ENCODE measurements at regions of chr2 and their contacts with region 1.

Region 1: GRCh38 chr2:234135720-234136221 is 85.3 kb downstream of the SPP2 start:
- DNase-seq: peak; percentile 84
- H3K4me3 Mint-ChIP-seq: no peak overlapping the region
- H3K27ac Mint-ChIP-seq: peak overlapping the region; percentile 57
- H3K4me1 Mint-ChIP-seq: peaks cover 21% of the 10 kb centered on the region
- H3K27me3 Mint-ChIP-seq: peaks cover 7% of the 10 kb centered on the region

Region 2: DNA sequence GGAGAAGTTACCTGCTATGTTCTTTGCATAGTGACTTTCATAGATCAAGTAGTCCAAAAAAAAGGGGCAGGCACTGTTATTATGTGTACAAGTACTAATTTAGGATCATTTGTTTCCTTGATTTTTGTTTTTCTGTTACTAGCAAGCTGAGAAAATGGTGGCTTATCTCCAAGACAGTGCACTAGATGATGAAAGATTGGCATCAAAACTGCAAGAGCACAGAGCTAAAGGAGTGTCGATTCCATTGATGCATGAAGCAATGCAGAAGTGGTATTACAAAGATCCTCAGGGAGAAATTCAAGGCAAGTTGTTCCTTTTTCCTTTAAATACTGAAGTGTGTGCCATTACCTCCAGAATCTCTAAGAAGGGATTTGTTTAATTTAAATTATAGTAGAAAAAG is 1339.9 kb before region 1 on chr2:
- intact Hi-C with region 1: no loop called
- DNase-seq: no peak
- H3K4me3 Mint-ChIP-seq: no peak overlapping the region
- H3K27ac Mint-ChIP-seq: no peak overlapping the region
- H3K4me1 Mint-ChIP-seq: no peaks in the 10 kb centered on the region
- H3K27me3 Mint-ChIP-seq: no peaks in the 10 kb centered on the region

Region 3: GRCh38 chr2:233976690-233977294 is 159.0 kb before region 1 on chr2:
- intact Hi-C with region 1: loop called (anchors 10 kb)
- DNase-seq: peak; percentile 84
- H3K4me3 Mint-ChIP-seq: no peak overlapping the region
- H3K27ac Mint-ChIP-seq: no peak overlapping the region
- H3K4me1 Mint-ChIP-seq: peaks cover 23% of the 10 kb centered on the region
- H3K27me3 Mint-ChIP-seq: peaks cover 8% of the 10 kb centered on the region

Region 4: GRCh38 chr2:234156326-234156725 is 20.6 kb after region 1 on chr2:
- intact Hi-C with region 1: no loop called
- DNase-seq: no peak
- H3K4me3 Mint-ChIP-seq: no peak overlapping the region
- H3K27ac Mint-ChIP-seq: no peak overlapping the region
- H3K4me1 Mint-ChIP-seq: peaks cover 3% of the 10 kb centered on the region
- H3K27me3 Mint-ChIP-seq: peaks cover 17% of the 10 kb centered on the region

Region 5: GRCh38 chr2:234269769-234270204 is 134.0 kb after region 1 on chr2:
- intact Hi-C with region 1: loop called (anchors 5 kb)
- DNase-seq: no peak
- H3K4me3 Mint-ChIP-seq: no peak overlapping the region
- H3K27ac Mint-ChIP-seq: peak overlapping the region; percentile 73
- H3K4me1 Mint-ChIP-seq: peaks cover 68% of the 10 kb centered on the region
- H3K27me3 Mint-ChIP-seq: no peaks in the 10 kb centered on the region

Region 6: DNA sequence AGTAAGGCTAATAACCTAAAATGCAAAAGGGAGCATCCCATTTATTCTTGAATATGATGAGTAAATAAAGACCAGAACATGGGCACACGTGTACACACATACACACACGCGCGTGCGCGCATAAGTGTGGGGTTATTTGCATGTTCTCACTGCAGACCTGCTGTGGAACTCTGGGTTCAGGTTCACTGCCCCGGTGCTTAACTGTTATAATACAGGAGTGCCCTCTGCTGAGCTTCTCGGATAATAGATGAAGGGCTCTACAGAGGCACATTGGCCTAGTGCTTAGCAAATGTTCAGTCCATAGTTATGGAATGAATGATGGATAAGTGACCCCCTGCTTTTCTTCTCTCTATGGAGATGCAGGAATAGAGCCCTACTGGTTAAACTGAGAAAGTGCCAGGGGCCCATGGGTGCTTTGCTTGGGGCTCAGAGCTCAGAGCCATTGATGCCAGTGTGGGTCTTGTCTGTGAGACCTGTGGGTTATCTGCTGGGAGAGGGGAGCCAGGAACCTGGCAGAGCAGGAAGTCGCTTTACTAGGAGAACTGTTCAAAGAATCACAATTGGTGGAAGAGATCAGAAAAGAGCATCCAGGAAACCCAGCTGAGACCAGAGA is 364.7 kb after region 1 on chr2:
- intact Hi-C with region 1: loop called (anchors 1 kb)
- DNase-seq: peak; percentile 92
- H3K4me3 Mint-ChIP-seq: no peak overlapping the region
- H3K27ac Mint-ChIP-seq: peak overlapping the region; percentile 9
- H3K4me1 Mint-ChIP-seq: peaks cover 29% of the 10 kb centered on the region
- H3K27me3 Mint-ChIP-seq: peaks cover 23% of the 10 kb centered on the region

Region 7: GRCh38 chr2:234544659-234545611 is 409.2 kb after region 1 on chr2:
- intact Hi-C with region 1: loop called (anchors 2 kb)
- DNase-seq: peak; percentile 94
- H3K4me3 Mint-ChIP-seq: no peak overlapping the region
- H3K27ac Mint-ChIP-seq: no peak overlapping the region
- H3K4me1 Mint-ChIP-seq: peaks cover 2% of the 10 kb centered on the region
- H3K27me3 Mint-ChIP-seq: peaks cover 32% of the 10 kb centered on the region